Heart right ventricle (tissue), 16 donors: ENCODE measurements at regions of chr2 and their contacts with region 1.

Region 1: GRCh38 chr2:64767670-64768468 is 114.2 kb upstream of the SERTAD2 start:
- DNase-seq: peak; percentile 89 to 94
- ATAC-seq: peak; percentile 95 to 99 (median 96)
- H3K4me3 ChIP-seq: peak overlapping the region; percentile 26 to 75 (median 70)
- H3K27ac ChIP-seq: peak overlapping the region; percentile 95 to 99 (median 98)
- H3K4me1 ChIP-seq: peaks cover 0 to 36% (median 17%) of the 10 kb centered on the region in 9 donors
- H3K27me3 ChIP-seq: no peaks in the 10 kb centered on the region
- CTCF ChIP-seq: peak in 2 of 9 donors; percentile 10 to 35

Region 2: GRCh38 chr2:64653349-64654062 is 114.4 kb before region 1 on chr2 and contains the start of gene SERTAD2:
- intact Hi-C with region 1: loop called in 9 of 10 experiments (anchors 2 to 5 kb)
- DNase-seq: peak; percentile 90 to 92
- ATAC-seq: peak; percentile 89 to 93 (median 92)
- H3K4me3 ChIP-seq: peak within 1 kb of the TSS; percentile 65 to 99 (median 87)
- H3K27ac ChIP-seq: peak within 1 kb of the TSS; percentile 92 to 100 (median 99)
- H3K4me1 ChIP-seq: peaks cover 0 to 75% (median 57%) of the 10 kb centered on the region in 9 donors
- H3K27me3 ChIP-seq: no peaks in the 10 kb centered on the region
- CTCF ChIP-seq: peak in 6 of 9 donors; percentile 4 to 31 (median 24)
- total RNA-seq, gene SERTAD2: 11.3 to 20.9 (median 16.6) TPM

Region 3: DNA sequence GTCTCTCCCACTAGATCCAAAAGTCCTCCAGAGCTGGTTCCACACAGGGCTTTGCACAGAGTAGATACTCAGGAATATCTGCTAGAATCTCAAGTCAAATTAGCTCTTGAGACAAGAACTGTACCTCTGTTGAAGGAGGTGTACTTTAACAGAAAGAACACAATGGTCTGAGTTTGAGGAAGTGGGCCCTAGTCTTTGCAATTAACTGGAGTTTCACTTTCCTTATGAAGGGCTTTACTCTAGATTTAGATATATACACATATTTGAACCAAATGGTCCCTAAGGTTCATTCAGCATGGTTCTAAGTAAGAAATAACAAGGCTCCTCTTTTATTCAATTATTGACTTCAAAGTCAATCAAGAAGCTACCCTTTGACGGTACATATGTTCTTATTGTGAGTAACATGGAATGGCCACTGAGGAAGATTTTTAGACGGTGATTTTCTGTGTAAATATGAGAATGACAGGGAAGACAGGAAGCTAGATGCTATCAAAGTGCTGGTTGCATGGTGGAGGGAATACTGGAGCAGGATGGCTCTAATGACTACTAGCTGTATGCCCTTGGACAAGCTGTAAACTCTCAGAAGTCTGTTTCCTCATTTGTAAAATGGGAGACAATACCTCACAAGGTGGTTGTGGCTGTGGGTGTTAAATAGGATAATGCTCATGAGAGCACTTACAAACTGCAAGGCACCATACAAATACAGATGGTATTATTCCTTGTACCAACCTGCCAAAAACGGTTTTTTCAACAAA is 40.7 kb before region 1 on chr2:
- intact Hi-C with region 1: no loop called
- DNase-seq: no peak
- ATAC-seq: peak in 3 of 8 donors; percentile 43 to 61 (median 48)
- H3K4me3 ChIP-seq: peak overlapping the region in 4 of 10 donors; percentile 3 to 19 (median 12)
- H3K27ac ChIP-seq: peak overlapping the region in 6 of 10 donors; percentile 9 to 85 (median 43)
- H3K4me1 ChIP-seq: peaks cover 0 to 44% (median 23%) of the 10 kb centered on the region in 9 donors
- H3K27me3 ChIP-seq: no peaks in the 10 kb centered on the region
- CTCF ChIP-seq: no peak

Region 4: GRCh38 chr2:64831134-64831976 is 63.5 kb after region 1 on chr2:
- intact Hi-C with region 1: loop called in 1 of 10 experiments (anchors 10 kb)
- DNase-seq: peak; percentile 80 to 82
- ATAC-seq: peak; percentile 86 to 98 (median 94)
- H3K4me3 ChIP-seq: peak overlapping the region in 2 of 10 donors; percentile 15 to 23
- H3K27ac ChIP-seq: peak overlapping the region in 9 of 10 donors; percentile 11 to 87 (median 70)
- H3K4me1 ChIP-seq: peaks cover 0 to 17% (median 11%) of the 10 kb centered on the region in 9 donors
- H3K27me3 ChIP-seq: no peaks in the 10 kb centered on the region
- CTCF ChIP-seq: peak; percentile 83 to 95 (median 89)

Region 5: DNA sequence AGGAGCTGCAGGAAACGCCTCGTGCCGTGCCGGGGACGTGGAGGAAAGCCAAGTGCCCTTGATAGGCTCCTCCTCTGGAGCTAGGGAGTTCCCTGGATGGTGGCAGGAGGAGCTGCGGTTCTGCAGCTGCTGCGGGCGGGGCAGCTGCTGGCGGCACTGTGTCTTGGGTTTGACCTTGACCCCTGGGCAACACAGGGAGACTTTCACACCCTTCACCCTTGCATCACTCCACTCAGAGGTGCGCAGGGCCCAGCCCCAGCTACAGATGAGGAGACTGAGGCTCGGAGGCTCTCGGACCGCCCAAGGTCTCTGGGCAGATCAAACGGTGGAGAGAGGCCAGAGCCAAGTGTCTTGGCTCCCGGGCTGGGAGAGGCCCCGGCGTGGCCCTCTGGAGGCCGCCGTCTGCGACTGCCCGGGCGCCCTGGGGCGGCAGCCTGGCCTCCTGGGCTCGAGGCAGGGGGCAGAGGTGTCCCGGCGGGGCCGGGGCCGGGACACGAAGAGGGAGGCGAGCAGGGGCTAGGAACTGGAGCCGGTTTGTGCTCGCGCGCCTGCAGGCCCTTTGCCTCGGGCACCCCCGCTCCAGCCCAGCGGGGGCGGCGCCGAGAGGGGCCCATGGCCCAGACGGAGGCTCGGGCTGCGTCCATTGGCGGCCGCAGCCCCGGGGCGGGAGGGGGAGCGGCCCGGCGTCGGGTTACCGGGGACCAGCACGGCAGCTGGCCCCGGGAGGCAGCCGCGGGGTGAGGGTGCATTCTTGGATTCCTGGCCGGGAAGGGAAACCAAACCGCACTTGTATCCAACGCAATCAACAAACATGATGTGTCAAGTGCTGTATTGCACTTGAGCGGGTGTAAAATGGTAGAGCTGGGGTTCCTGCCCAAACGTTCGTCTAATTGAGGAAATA is 91.7 kb after region 1 on chr2:
- intact Hi-C with region 1: loop called in 8 of 10 experiments (anchors 2 to 10 kb)
- DNase-seq: peak; percentile 89 to 90
- ATAC-seq: peak; percentile 82 to 91 (median 84)
- H3K4me3 ChIP-seq: peak overlapping the region; percentile 22 to 62 (median 53)
- H3K27ac ChIP-seq: peak overlapping the region; percentile 84 to 99 (median 94)
- H3K4me1 ChIP-seq: peaks cover 23 to 91% (median 37%) of the 10 kb centered on the region in 9 donors
- H3K27me3 ChIP-seq: no peaks in the 10 kb centered on the region
- CTCF ChIP-seq: peak in 1 of 9 donors; percentile 11